CD4-positive, alpha-beta memory T cell (primary cell): ENCODE measurements at regions of chr3 and their contacts with region 1.

Region 1: GRCh38 chr3:105806361-105806760 is 62.5 kb downstream of the CBLB start:
- DNase-seq: peak in 4 of 5 donors; percentile 50 to 79 (median 62)
- H3K4me3 ChIP-seq: no peak overlapping the region
- H3K4me3 Mint-ChIP-seq: peak overlapping the region in 5 of 8 donors; percentile 0 to 48 (median 3)
- H3K27ac ChIP-seq: no peak overlapping the region
- H3K27ac Mint-ChIP-seq: peak overlapping the region; percentile 35 to 89 (median 76)
- H3K4me1 ChIP-seq: peaks cover 59% of the 10 kb centered on the region
- H3K4me1 Mint-ChIP-seq: peaks cover 46 to 72% (median 54%) of the 10 kb centered on the region in 4 donors
- H3K27me3 ChIP-seq: no peaks in the 10 kb centered on the region
- H3K27me3 Mint-ChIP-seq: no peaks in the 10 kb centered on the region

Region 2: DNA sequence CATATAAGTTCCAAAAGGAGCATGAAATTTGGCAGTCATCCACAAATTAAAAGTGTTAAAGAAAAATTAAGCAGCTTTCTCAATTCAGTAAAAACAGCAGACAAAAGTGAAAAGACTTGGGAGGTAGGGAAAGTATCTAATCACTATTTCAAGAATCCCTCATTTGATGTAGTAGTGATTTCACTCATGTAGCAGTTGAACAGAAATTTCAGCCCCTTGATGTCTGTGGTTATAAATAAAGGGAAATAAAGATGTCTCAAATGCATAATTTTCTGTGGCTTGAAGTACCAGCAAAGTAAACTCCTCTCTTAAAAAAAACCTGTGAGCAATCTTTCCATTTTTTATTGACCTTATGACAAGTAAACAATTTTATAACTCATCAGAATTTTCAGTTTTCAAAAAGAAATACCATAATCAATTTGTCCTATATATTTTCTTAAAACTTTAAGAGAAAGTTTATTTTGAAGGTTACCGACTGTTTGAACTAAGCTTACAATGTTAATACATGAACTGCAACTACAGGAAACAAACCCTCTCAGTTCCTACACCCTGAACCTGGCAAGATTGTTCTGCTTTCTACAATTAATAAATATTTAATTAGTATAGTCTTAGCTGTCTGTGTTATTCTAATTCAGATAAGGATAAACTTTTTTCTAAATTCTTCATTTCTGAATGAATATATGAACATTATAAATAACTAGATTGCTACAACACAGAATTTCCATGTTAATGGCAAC is 31.7 kb before region 1 on chr3:
- CTCF ChIA-PET with region 1: no interaction called
- POLR2A ChIA-PET with region 1: no interaction called
- intact Hi-C with region 1: loop called (anchors 5 kb)
- DNase-seq: no peak
- H3K4me3 ChIP-seq: no peak overlapping the region
- H3K4me3 Mint-ChIP-seq: peak overlapping the region in 7 of 8 donors; percentile 7 to 75 (median 21)
- H3K27ac ChIP-seq: no peak overlapping the region
- H3K27ac Mint-ChIP-seq: peak overlapping the region in 4 of 7 donors; percentile 0 to 47 (median 34)
- H3K4me1 ChIP-seq: peaks cover 65% of the 10 kb centered on the region
- H3K4me1 Mint-ChIP-seq: peaks cover 51 to 82% (median 70%) of the 10 kb centered on the region in 4 donors
- H3K27me3 ChIP-seq: no peaks in the 10 kb centered on the region
- H3K27me3 Mint-ChIP-seq: no peaks in the 10 kb centered on the region